ENCODE measurements at regions of chr14 and their contacts with region 1.

Region 1: GRCh38 chr14:80996049-80996901 is 40.9 kb downstream of the TSHR start:
- DNase-seq: peak; percentile 45 to 56
- H3K4me3 ChIP-seq: no peak overlapping the region
- H3K4me3 Mint-ChIP-seq: no peak overlapping the region
- H3K27ac Mint-ChIP-seq: no peak overlapping the region
- H3K4me1 ChIP-seq: no peaks in the 10 kb centered on the region
- H3K4me1 Mint-ChIP-seq: no peaks in the 10 kb centered on the region
- H3K27me3 ChIP-seq: no peaks in the 10 kb centered on the region
- H3K27me3 Mint-ChIP-seq: peaks cover 32% of the 10 kb centered on the region
- CTCF ChIP-seq: peak; percentile 52 to 70

Region 2: DNA sequence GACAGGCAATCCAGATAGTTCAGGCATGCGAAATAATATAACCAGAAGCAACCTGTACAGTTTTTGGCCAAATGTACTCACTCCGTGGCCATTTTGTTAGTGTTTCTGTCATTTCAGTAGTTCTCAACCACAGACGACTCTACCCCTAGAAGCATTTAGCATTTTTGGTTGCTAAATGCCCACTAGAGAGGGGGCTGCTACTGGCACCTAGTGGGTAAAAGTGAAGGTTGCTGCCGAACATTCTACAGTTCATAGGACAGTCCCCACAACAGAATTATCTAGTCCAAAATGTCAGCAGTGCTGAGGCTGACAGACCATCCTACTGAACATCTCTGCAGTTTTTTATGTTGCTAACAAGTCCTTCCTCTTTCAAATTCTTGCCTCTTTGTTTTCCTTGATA is 66.5 kb after region 1 on chr14:
- CTCF ChIA-PET with region 1: no interaction called
- POLR2A ChIA-PET with region 1: no interaction called
- intact Hi-C with region 1: loop called (anchors 1 kb)
- DNase-seq: peak in 1 of 2 experiments; percentile 41
- H3K4me3 ChIP-seq: no peak overlapping the region
- H3K4me3 Mint-ChIP-seq: no peak overlapping the region
- H3K27ac Mint-ChIP-seq: no peak overlapping the region
- H3K4me1 ChIP-seq: no peaks in the 10 kb centered on the region
- H3K4me1 Mint-ChIP-seq: no peaks in the 10 kb centered on the region
- H3K27me3 ChIP-seq: no peaks in the 10 kb centered on the region
- H3K27me3 Mint-ChIP-seq: no peaks in the 10 kb centered on the region
- CTCF ChIP-seq: peak; percentile 25 to 57

Region 3: GRCh38 chr14:81122326-81122725 is 126.1 kb after region 1 on chr14:
- CTCF ChIA-PET with region 1: no interaction called
- POLR2A ChIA-PET with region 1: no interaction called
- intact Hi-C with region 1: no loop called
- DNase-seq: no peak
- H3K4me3 ChIP-seq: no peak overlapping the region
- H3K4me3 Mint-ChIP-seq: no peak overlapping the region
- H3K27ac Mint-ChIP-seq: no peak overlapping the region
- H3K4me1 ChIP-seq: no peaks in the 10 kb centered on the region
- H3K4me1 Mint-ChIP-seq: no peaks in the 10 kb centered on the region
- H3K27me3 ChIP-seq: no peaks in the 10 kb centered on the region
- H3K27me3 Mint-ChIP-seq: no peaks in the 10 kb centered on the region
- CTCF ChIP-seq: no peak

Region 4: DNA sequence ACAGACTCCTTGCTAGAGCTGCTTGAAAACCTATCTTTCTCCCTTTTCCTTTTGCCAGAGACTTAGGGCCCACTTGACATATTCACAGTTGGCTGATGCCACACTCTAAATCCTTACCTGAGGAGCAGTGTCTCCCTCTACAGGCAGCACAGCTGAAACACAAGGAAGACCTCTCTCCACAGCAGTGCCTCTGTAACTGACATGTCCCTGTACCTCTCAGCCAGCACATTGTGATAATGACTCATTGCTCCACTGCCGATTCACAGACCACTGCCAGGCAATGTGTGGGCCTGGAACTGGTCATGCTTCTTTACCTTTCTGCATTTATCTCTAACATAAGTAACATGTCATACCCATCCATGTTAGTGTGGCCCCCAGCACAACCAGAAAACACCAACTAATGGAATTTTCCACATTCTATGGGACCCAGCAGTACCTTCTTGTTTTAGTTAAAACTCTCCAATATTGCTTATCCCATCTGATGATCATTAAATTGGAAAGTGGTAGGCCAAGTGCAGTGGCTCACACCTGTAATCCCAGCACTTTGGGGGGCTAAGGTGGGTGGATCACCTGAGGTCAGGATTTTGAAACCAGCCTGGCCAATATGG is 168.0 kb after region 1 on chr14:
- CTCF ChIA-PET with region 1: interaction called, 3 read pairs
- POLR2A ChIA-PET with region 1: no interaction called
- intact Hi-C with region 1: loop called (anchors 1 kb)
- DNase-seq: peak; percentile 57 to 62
- H3K4me3 ChIP-seq: no peak overlapping the region
- H3K4me3 Mint-ChIP-seq: no peak overlapping the region
- H3K27ac Mint-ChIP-seq: no peak overlapping the region
- H3K4me1 ChIP-seq: no peaks in the 10 kb centered on the region
- H3K4me1 Mint-ChIP-seq: no peaks in the 10 kb centered on the region
- H3K27me3 ChIP-seq: no peaks in the 10 kb centered on the region
- H3K27me3 Mint-ChIP-seq: no peaks in the 10 kb centered on the region
- CTCF ChIP-seq: peak; percentile 43 to 61